Right cardiac atrium (tissue), 5 donors: ENCODE measurements at regions of chr2 and their contacts with region 1.

Region 1: DNA sequence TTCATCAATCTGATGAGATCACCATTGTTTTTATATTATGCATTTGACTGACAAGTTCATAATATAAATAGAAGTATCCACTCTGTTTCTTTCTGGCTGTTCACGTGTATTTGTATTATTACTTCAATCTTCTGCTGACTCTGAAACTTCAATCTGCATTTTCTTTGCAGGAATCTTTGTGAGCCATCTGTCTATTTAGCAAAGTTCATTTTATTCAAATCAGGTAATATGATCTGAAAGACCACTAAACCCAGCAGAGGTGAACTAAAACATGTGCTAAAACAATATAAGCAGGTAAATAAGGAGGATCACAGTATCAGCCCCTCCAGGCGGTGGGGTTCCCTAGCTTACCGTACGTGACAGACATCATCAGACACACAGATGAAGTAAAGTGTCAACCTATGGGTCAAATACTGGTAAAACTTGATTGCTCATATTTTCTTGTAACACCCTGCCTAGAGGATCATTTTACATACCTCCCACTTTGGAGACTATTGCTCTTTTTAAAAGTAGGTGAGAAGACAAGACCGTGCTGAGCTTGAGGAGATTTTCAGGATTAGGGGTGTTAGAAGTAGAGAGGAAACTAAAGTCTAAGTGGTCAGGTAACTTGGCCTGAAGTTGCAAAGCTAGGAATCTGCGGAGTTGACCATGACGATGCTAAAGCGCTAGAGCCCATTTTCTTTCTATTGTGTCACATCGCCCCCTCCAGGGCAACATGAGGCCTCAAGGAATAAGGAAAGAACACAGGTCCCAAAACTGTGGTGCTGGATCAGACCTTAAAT is 9.0 kb downstream of the DTNB start:
- DNase-seq: peak in 2 of 3 donors; percentile 50 to 76
- ATAC-seq: peak; percentile 83 to 87
- H3K4me3 ChIP-seq: no peak overlapping the region
- H3K27ac ChIP-seq: no peak overlapping the region
- H3K4me1 ChIP-seq: no peaks in the 10 kb centered on the region
- H3K27me3 ChIP-seq: no peaks in the 10 kb centered on the region

Region 2: DNA sequence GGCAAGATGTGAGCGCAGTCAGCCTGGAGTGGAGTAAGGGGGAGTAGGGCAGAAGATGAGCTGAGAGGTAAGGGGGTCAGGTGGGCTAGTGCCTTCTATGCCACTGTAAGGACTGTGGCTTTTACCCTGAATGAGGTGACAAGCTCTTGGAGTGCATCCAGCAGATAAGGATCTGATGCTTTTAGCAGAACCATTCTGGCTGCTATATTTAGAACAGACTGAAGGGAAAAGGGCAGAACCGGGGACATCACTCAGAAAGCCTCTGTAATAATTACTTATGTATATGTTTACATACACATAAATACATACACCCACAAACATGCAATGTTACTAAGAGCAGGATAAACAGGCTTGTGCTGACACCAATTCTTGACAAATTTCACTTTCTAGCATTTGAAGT is 115.8 kb before region 1 on chr2:
- intact Hi-C with region 1: no loop called
- DNase-seq: no peak
- ATAC-seq: no peak
- H3K4me3 ChIP-seq: no peak overlapping the region
- H3K27ac ChIP-seq: no peak overlapping the region
- H3K4me1 ChIP-seq: peaks cover 3% of the 10 kb centered on the region
- H3K27me3 ChIP-seq: no peaks in the 10 kb centered on the region

Region 3: DNA sequence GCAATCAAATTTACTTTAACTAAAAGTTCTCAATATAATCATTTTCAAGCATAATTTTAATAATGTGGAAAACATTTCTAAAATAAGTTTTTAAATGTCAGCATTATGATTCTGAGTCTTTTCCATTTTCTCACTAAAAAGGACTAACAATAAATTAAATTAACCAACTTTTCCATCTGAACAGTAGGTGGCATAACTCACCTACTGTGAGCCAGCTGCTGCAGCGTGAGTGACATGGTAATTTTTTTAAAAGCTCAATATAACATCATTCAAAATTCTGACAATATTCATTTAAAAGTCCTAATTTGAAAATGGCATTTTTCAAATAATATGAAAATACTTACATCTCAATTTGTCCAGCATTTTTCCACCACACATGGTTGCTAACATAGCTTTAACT is 57.5 kb before region 1 on chr2:
- intact Hi-C with region 1: loop called in 3 of 4 experiments (anchors 2 to 10 kb)
- DNase-seq: no peak
- ATAC-seq: no peak
- H3K4me3 ChIP-seq: no peak overlapping the region
- H3K27ac ChIP-seq: no peak overlapping the region
- H3K4me1 ChIP-seq: no peaks in the 10 kb centered on the region
- H3K27me3 ChIP-seq: no peaks in the 10 kb centered on the region

Region 4: DNA sequence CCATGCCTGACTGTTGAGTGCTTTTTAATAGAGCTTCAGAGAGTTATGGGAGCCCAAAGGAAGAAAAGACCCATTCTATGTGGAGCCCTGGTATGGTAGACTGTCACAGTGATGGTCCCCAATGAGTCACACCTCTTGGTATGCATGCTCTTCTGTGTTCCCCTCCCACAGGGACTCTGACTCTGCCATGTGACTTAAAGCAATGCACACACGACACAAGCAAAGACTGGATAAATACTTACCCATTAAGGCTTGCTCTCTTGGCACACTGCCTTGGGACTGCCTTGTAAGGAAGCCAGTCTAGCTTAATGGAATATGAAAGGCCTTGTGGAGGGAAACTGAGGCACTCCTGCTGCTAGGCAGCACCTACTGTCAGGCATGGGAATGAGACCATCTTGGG is 25.7 kb after region 1 on chr2:
- intact Hi-C with region 1: no loop called
- DNase-seq: no peak
- ATAC-seq: no peak
- H3K4me3 ChIP-seq: no peak overlapping the region
- H3K27ac ChIP-seq: no peak overlapping the region
- H3K4me1 ChIP-seq: no peaks in the 10 kb centered on the region
- H3K27me3 ChIP-seq: no peaks in the 10 kb centered on the region

Region 5: GRCh38 chr2:25787013-25787412 is 122.6 kb after region 1 on chr2:
- intact Hi-C with region 1: no loop called
- DNase-seq: no peak
- ATAC-seq: no peak
- H3K4me3 ChIP-seq: no peak overlapping the region
- H3K27ac ChIP-seq: no peak overlapping the region
- H3K4me1 ChIP-seq: no peaks in the 10 kb centered on the region
- H3K27me3 ChIP-seq: no peaks in the 10 kb centered on the region